ENCODE measurements at regions of chr2 and their contacts with region 1.

Region 1: GRCh38 chr2:27960237-27960912 is 69.8 kb downstream of the BABAM2 start:
- DNase-seq: no peak
- ATAC-seq: no peak
- H3K4me3 ChIP-seq: no peak overlapping the region
- H3K27ac ChIP-seq: no peak overlapping the region
- H3K4me1 ChIP-seq: no peaks in the 10 kb centered on the region
- H3K27me3 ChIP-seq: no peaks in the 10 kb centered on the region
- CTCF ChIP-seq: no peak
- EP300 ChIP-seq: no peak
- POLR2A ChIP-seq: no peak
- RAD21 ChIP-seq: no peak

Region 2: DNA sequence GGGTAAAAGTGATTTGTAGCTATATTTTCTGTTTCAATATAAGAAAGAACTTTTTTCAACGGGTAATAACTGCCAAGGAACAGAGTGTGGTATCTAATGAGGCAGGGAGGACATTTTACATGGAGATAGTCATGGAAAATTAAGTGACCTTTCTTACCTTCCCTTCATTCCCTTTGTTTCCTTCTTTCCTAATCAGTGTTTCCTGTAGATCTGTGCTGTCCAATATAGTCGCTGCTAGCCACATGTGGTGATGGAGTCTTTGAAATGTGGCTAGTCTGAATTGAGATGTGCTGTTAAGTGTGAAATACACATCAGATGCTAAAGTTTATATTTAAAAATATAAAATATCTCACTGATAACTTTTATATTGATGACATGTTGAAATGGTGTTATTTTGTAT is 11.9 kb after region 1 on chr2:
- CTCF ChIA-PET with region 1: interaction called, 4 read pairs
- POLR2A ChIA-PET with region 1: no interaction called
- RAD21 ChIA-PET with region 1: no interaction called
- SMC1A ChIA-PET with region 1: interaction called, 14 read pairs
- in situ Hi-C with region 1: no loop called
- intact Hi-C with region 1: no loop called
- DNase-seq: no peak
- ATAC-seq: no peak
- H3K4me3 ChIP-seq: no peak overlapping the region
- H3K27ac ChIP-seq: no peak overlapping the region
- H3K4me1 ChIP-seq: no peaks in the 10 kb centered on the region
- H3K27me3 ChIP-seq: no peaks in the 10 kb centered on the region
- CTCF ChIP-seq: no peak
- EP300 ChIP-seq: no peak
- POLR2A ChIP-seq: no peak
- RAD21 ChIP-seq: no peak

Measured in GM12878 (cell line).